MCF 10A (cell line): ENCODE measurements at regions of chr12 and their contacts with region 1.

Region 1: GRCh38 chr12:95582230-95583058 is 31.2 kb upstream of the USP44 start:
- DNase-seq: peak; percentile 51
- H3K4me3 Mint-ChIP-seq: no peak overlapping the region
- H3K27ac Mint-ChIP-seq: no peak overlapping the region
- H3K4me1 Mint-ChIP-seq: no peaks in the 10 kb centered on the region
- H3K27me3 Mint-ChIP-seq: no peaks in the 10 kb centered on the region
- CTCF ChIP-seq: peak; percentile 54

Region 2: GRCh38 chr12:95473884-95474659 is 108.4 kb before region 1 on chr12 and contains the start of gene METAP2:
- CTCF ChIA-PET with region 1: no interaction called
- POLR2A ChIA-PET with region 1: no interaction called
- intact Hi-C with region 1: no loop called
- DNase-seq: peak; percentile 98
- H3K4me3 Mint-ChIP-seq: peak within 1 kb of the TSS; percentile 90
- H3K27ac Mint-ChIP-seq: peak within 1 kb of the TSS; percentile 99
- H3K4me1 Mint-ChIP-seq: peaks cover 16% of the 10 kb centered on the region
- H3K27me3 Mint-ChIP-seq: no peaks in the 10 kb centered on the region
- CTCF ChIP-seq: no peak
- total RNA-seq, gene METAP2: 91.5 and 122 TPM in 2 replicates

Region 3: GRCh38 chr12:95593266-95593871 is 10.9 kb after region 1 on chr12:
- CTCF ChIA-PET with region 1: interaction called, 11 read pairs
- POLR2A ChIA-PET with region 1: no interaction called
- intact Hi-C with region 1: no loop called
- DNase-seq: no peak
- H3K4me3 Mint-ChIP-seq: no peak overlapping the region
- H3K27ac Mint-ChIP-seq: no peak overlapping the region
- H3K4me1 Mint-ChIP-seq: no peaks in the 10 kb centered on the region
- H3K27me3 Mint-ChIP-seq: no peaks in the 10 kb centered on the region
- CTCF ChIP-seq: no peak

Region 4: GRCh38 chr12:95623585-95624042 is 41.2 kb after region 1 on chr12:
- CTCF ChIA-PET with region 1: interaction called, 3 read pairs
- POLR2A ChIA-PET with region 1: no interaction called
- intact Hi-C with region 1: loop called (anchors 2 kb)
- DNase-seq: peak; percentile 90
- H3K4me3 Mint-ChIP-seq: no peak overlapping the region
- H3K27ac Mint-ChIP-seq: no peak overlapping the region
- H3K4me1 Mint-ChIP-seq: no peaks in the 10 kb centered on the region
- H3K27me3 Mint-ChIP-seq: no peaks in the 10 kb centered on the region
- CTCF ChIP-seq: peak; percentile 63

Region 5: GRCh38 chr12:95731519-95731958 is 149.1 kb after region 1 on chr12:
- CTCF ChIA-PET with region 1: no interaction called
- POLR2A ChIA-PET with region 1: no interaction called
- intact Hi-C with region 1: no loop called
- DNase-seq: no peak
- H3K4me3 Mint-ChIP-seq: no peak overlapping the region
- H3K27ac Mint-ChIP-seq: no peak overlapping the region
- H3K4me1 Mint-ChIP-seq: peaks cover 10% of the 10 kb centered on the region
- H3K27me3 Mint-ChIP-seq: no peaks in the 10 kb centered on the region
- CTCF ChIP-seq: no peak